PC-3 (cell line): ENCODE measurements at regions of chr19 and their contacts with region 1.

Region 1: GRCh38 chr19:55549500-55550320 is 4.4 kb upstream of the SBK3 start:
- DNase-seq: peak; percentile 81
- ATAC-seq: peak; percentile 42
- H3K4me3 ChIP-seq: no peak overlapping the region
- H3K27ac ChIP-seq: peak overlapping the region; percentile 86
- H3K4me1 ChIP-seq: peaks cover 46% of the 10 kb centered on the region
- H3K27me3 ChIP-seq: no peaks in the 10 kb centered on the region
- CTCF ChIP-seq: no peak

Region 2: DNA sequence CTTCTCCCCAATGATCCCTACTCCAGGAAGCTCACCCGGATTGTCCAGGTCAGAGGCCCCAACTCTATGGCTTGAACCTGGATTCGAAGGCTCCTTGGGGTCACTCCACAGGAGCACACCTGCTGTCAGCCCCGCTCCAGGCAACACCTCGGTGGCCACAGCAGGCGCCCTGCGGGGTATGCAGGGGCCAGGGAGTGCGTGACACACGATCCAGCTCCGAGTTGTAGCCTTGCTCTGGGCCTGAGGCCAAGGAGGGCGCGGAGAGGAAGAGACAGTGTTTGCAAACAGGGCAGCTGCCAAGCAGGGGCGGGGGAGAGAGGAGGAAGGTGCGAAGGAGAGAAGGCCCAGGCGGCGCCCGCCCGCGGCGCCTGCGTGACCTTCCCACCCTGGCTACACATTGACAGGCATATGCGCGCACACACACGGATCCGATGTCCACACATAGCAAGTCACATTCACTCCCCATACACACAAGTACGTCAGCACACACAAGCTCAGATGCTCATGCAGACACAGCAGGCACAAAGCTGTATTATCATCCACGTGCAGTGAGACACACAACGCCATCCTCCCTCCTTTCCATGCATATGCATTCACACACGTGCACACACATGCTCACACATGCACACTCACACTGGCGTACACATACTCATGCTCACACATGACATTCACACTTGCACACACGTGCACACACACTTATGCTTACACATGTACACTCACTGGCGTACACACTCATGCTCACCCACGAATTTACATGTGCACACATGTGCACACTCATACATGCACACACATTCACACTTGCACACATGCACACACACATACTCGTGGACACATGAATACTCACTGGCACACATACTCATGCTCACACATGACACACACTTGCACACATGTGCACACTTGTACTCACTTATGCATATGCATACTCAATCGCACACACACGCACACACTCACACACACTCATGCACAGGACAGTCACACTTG is 23.2 kb before region 1 on chr19:
- CTCF ChIA-PET with region 1: no interaction called
- POLR2A ChIA-PET with region 1: no interaction called
- intact Hi-C with region 1: loop called (anchors 1 kb)
- DNase-seq: peak; percentile 87
- ATAC-seq: peak; percentile 87
- H3K4me3 ChIP-seq: no peak overlapping the region
- H3K27ac ChIP-seq: no peak overlapping the region
- H3K4me1 ChIP-seq: peaks cover 12% of the 10 kb centered on the region; the same call in 1 of the 2 replicates
- H3K27me3 ChIP-seq: no peaks in the 10 kb centered on the region
- CTCF ChIP-seq: no peak

Region 3: GRCh38 chr19:55580628-55581144 is 31.0 kb after region 1 on chr19 and contains the start of gene ZNF579:
- CTCF ChIA-PET with region 1: no interaction called
- POLR2A ChIA-PET with region 1: no interaction called
- intact Hi-C with region 1: loop called (anchors 2 kb)
- DNase-seq: peak; percentile 92
- ATAC-seq: peak; percentile 78
- H3K4me3 ChIP-seq: peak within 1 kb of the TSS; percentile 93
- H3K27ac ChIP-seq: peak within 1 kb of the TSS; percentile 60
- H3K4me1 ChIP-seq: peaks cover 6% of the 10 kb centered on the region; the same call in 1 of the 2 replicates
- H3K27me3 ChIP-seq: no peaks in the 10 kb centered on the region
- CTCF ChIP-seq: no peak
- total RNA-seq, gene ZNF579: 13.5 and 26.1 TPM in 2 replicates

Region 4: DNA sequence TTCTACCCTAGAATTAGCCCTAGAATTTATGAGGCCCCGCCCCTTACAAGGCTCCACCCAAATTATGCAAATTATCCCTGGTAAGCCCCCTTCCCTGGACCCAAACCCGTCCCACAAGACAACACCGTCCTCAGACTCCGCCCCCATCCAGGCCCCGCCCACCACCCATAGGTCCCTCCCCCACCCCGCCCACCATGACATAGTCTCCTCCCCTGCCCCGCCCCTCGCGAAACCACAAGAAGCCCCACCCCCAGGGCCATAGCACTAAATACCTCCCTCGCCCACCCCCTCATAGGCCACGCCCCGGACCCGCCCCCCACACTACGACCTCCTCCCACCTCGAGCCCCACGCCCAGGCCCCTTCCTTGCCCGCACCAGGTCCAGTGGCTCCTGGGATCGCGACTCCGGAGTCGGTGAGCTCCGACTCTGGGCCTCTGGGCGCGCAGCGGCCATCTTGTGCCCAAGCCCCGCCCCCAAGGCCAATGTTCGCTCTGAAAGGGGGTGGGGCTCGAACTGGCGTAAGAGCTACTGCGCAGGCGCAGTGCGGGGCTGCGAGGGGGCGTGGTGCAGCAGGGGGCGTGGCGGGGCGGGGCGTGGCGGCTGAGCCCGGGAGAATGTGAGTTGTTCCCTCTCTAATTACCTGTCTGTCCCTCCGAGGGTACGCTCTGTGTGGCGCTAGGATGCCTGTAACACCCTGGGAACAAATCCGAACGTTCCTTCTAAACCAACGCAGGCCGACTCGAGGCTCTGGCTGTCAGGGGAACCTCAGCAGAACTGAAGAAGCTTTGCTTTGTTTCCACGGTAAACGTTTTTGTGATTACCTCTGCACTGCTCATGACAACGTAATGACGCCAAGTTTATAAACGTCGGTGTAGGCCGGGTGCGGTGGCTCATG is 74.6 kb after region 1 on chr19 and contains the start of gene ZNF784:
- CTCF ChIA-PET with region 1: no interaction called
- POLR2A ChIA-PET with region 1: no interaction called
- intact Hi-C with region 1: no loop called
- DNase-seq: peak; percentile 95
- ATAC-seq: peak; percentile 87
- H3K4me3 ChIP-seq: peak within 1 kb of the TSS; percentile 71
- H3K27ac ChIP-seq: peak within 1 kb of the TSS; percentile 76
- H3K4me1 ChIP-seq: peaks cover 10% of the 10 kb centered on the region
- H3K27me3 ChIP-seq: no peaks in the 10 kb centered on the region
- CTCF ChIP-seq: no peak
- total RNA-seq, gene ZNF784: 9.0 and 18.0 TPM in 2 replicates

Region 5: GRCh38 chr19:55993492-55993891 is 443.8 kb after region 1 on chr19:
- CTCF ChIA-PET with region 1: no interaction called
- POLR2A ChIA-PET with region 1: no interaction called
- intact Hi-C with region 1: no loop called
- DNase-seq: no peak
- ATAC-seq: no peak
- H3K4me3 ChIP-seq: no peak overlapping the region
- H3K27ac ChIP-seq: no peak overlapping the region
- H3K4me1 ChIP-seq: no peaks in the 10 kb centered on the region
- H3K27me3 ChIP-seq: peaks cover 43% of the 10 kb centered on the region
- CTCF ChIP-seq: no peak